Gastrocnemius medialis (tissue), 4 donors: ENCODE measurements at regions of chr4 and their contacts with region 1.

Region 1: DNA sequence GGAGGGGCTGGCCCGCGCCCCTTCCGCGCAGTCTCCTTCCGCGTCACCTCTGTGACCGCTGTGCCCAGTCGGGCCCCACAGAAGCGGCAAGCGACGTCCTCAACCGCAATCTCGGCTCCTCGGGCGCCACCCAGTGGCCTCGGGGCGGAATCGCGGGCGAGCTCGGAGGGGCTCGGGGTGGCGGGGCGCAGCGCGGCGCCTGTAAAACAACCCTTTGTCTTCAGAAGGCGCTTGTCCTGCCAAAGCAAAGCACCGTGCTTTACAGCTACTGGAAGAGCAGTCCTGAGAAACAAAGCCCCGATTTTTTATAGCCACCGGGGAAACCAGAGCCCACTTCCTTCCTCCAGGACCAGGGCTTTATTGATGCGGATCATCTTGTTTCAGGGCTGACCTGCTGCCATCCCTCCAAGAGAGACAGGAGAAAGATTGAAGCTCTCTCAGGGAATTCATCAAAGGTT is 37.3 kb upstream of the CDKN2AIP start:
- DNase-seq: peak; percentile 42 to 56
- ATAC-seq: peak; percentile 93 to 96
- H3K4me3 ChIP-seq: peak overlapping the region; percentile 49 to 56 (median 52)
- H3K27ac ChIP-seq: peak overlapping the region in 1 of 4 donors; percentile 15
- H3K4me1 ChIP-seq: no peaks in the 10 kb centered on the region
- H3K27me3 ChIP-seq: no peaks in the 10 kb centered on the region
- CTCF ChIP-seq: peak; percentile 65 to 95 (median 85)
- POLR2A ChIP-seq: no peak

Region 2: GRCh38 chr4:183321079-183321478 is 86.1 kb before region 1 on chr4:
- in situ Hi-C with region 1: loop called in 1 of 4 experiments (anchors 25 kb)
- intact Hi-C with region 1: no loop called
- DNase-seq: no peak
- ATAC-seq: no peak
- H3K4me3 ChIP-seq: no peak overlapping the region
- H3K27ac ChIP-seq: no peak overlapping the region
- H3K4me1 ChIP-seq: no peaks in the 10 kb centered on the region
- H3K27me3 ChIP-seq: no peaks in the 10 kb centered on the region
- CTCF ChIP-seq: no peak
- POLR2A ChIP-seq: no peak